ENCODE measurements at regions of chr3 and their contacts with region 1.

Region 1: GRCh38 chr3:132029182-132029902 is 5.5 kb downstream of the CPNE4 start:
- DNase-seq: peak; percentile 98
- H3K4me3 Mint-ChIP-seq: peak overlapping the region; percentile 27
- H3K27ac Mint-ChIP-seq: no peak overlapping the region
- H3K4me1 Mint-ChIP-seq: peaks cover 52% of the 10 kb centered on the region
- H3K27me3 Mint-ChIP-seq: no peaks in the 10 kb centered on the region
- CTCF ChIP-seq: peak; percentile 97

Region 2: DNA sequence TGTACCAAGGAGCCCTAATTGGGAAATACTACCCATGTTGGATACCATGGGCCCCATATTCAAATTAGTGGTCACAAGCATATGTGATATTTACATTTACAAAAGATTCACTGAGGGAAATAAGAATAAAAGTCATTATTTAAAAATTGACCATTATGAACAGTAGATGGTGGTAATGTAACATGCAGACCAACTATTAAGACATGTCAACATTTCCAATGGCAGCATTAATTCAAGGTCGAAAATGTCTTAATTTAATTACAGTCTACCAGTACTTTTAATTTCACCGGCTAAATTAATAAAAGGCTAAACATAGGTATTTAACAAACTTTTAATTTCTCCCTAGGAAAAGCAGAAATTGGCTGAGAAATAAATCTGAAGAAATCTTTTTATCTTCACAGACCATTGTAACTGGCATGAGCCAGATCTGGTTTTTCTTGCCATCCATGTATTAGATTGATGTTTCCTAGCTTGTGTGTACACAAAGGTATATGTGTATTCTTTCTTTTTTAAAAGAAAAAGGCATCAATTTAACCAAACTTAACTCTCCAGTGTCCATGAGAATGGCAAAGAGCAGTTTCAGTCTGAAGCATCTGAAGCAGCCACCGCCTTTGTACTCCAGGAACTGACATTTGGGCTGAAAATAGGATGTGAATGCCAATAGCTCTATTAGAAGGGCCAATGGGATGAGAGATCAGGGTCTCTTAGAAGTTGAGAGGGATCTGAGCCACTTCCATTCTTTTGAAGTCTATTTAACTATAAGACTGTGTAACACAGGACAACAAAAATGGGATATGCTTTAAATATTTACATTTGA is 976.1 kb before region 1 on chr3:
- CTCF ChIA-PET with region 1: no interaction called
- intact Hi-C with region 1: loop called (anchors 5 kb)
- DNase-seq: no peak
- H3K4me3 Mint-ChIP-seq: no peak overlapping the region
- H3K27ac Mint-ChIP-seq: no peak overlapping the region
- H3K4me1 Mint-ChIP-seq: no peaks in the 10 kb centered on the region
- H3K27me3 Mint-ChIP-seq: no peaks in the 10 kb centered on the region
- CTCF ChIP-seq: no peak

Region 3: DNA sequence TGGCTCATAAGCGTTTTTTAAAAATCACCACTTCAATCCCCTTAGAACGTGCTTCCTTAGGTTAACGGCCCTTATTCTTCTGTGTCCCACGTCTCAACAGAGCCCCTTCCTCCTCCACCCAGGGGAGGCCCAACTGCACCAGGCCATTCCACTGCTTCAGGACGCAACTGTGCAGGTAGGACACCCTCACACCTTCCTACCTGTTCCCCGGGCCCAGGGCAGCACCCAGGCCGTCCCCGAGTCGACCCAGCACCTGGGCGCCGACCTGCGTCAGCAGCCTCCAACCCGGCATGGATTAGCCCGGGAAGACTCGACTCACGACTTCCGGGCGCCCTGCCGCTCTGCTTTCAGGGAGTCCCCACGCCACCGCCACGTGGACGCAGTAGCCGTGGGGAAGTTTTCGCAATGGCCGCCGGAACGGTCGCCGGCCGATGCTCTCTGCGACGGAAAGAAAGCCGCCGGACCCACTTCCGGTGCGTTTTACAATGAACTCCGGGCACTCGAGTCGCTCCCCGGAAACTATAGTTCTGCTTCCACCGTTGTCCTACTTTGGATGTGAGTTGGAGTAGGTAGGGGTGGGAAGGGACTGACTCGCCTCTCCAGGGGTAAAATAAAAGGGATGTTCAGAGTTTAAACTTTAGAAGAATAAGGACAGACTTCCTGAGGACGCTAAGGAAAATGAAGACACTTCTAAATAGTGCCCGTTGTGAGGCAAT is 526.7 kb before region 1 on chr3 and contains the start of gene MRPL3:
- CTCF ChIA-PET with region 1: interaction called, 3 read pairs
- intact Hi-C with region 1: loop called (anchors 5 kb)
- DNase-seq: peak; percentile 93
- H3K4me3 Mint-ChIP-seq: peak within 1 kb of the TSS; percentile 99
- H3K27ac Mint-ChIP-seq: peak within 1 kb of the TSS; percentile 98
- H3K4me1 Mint-ChIP-seq: peaks cover 10% of the 10 kb centered on the region
- H3K27me3 Mint-ChIP-seq: no peaks in the 10 kb centered on the region
- CTCF ChIP-seq: no peak
- total RNA-seq, gene MRPL3: 183 and 210 TPM in 2 replicates

Region 4: DNA sequence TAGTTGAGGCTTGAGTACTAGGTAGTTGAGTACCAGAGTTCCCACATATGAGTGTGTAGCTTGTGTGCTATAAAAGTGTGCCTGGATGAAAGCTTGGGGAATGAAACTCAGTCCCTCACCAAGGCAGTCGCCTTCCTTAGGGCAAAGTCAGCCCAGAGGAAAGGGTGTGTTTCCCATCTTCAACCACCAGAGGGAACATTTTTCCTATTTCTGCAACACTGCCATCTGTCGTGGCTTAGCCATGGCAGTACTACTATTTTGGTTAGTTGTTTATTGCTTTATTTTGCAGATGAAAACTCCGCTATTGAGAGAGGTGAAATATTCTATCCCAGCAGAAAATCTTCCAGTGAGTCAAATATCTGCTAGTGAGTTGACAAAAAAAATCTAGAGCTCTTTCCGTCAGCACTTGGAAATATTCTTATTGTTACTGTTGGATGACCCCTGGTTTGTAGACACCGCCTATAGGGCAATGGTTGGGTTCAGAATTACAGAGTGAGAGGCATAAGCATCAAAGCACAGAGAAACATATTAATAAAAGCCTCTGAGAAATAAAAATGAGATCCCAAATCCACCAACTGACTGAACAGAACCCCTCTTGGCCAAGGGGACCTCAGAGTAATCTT is 234.5 kb before region 1 on chr3:
- CTCF ChIA-PET with region 1: interaction called, 40 read pairs
- intact Hi-C with region 1: loop called (anchors 1 kb)
- DNase-seq: peak; percentile 77
- H3K4me3 Mint-ChIP-seq: no peak overlapping the region
- H3K27ac Mint-ChIP-seq: no peak overlapping the region
- H3K4me1 Mint-ChIP-seq: peaks cover 22% of the 10 kb centered on the region
- H3K27me3 Mint-ChIP-seq: no peaks in the 10 kb centered on the region
- CTCF ChIP-seq: peak; percentile 96

Region 5: GRCh38 chr3:132006605-132007204 is 22.6 kb before region 1 on chr3:
- CTCF ChIA-PET with region 1: interaction called, 10 read pairs
- intact Hi-C with region 1: loop called (anchors 1 kb)
- DNase-seq: peak; percentile 78
- H3K4me3 Mint-ChIP-seq: no peak overlapping the region
- H3K27ac Mint-ChIP-seq: no peak overlapping the region
- H3K4me1 Mint-ChIP-seq: peaks cover 33% of the 10 kb centered on the region
- H3K27me3 Mint-ChIP-seq: no peaks in the 10 kb centered on the region
- CTCF ChIP-seq: peak; percentile 86

Region 6: GRCh38 chr3:132145833-132146232 is 116.5 kb after region 1 on chr3:
- CTCF ChIA-PET with region 1: no interaction called
- intact Hi-C with region 1: no loop called
- DNase-seq: no peak
- H3K4me3 Mint-ChIP-seq: no peak overlapping the region
- H3K27ac Mint-ChIP-seq: no peak overlapping the region
- H3K4me1 Mint-ChIP-seq: peaks cover 11% of the 10 kb centered on the region
- H3K27me3 Mint-ChIP-seq: no peaks in the 10 kb centered on the region
- CTCF ChIP-seq: no peak